Dorsolateral prefrontal cortex (tissue), 120 donors: ENCODE measurements at regions of chr6 and their contacts with region 1.

Region 1: DNA sequence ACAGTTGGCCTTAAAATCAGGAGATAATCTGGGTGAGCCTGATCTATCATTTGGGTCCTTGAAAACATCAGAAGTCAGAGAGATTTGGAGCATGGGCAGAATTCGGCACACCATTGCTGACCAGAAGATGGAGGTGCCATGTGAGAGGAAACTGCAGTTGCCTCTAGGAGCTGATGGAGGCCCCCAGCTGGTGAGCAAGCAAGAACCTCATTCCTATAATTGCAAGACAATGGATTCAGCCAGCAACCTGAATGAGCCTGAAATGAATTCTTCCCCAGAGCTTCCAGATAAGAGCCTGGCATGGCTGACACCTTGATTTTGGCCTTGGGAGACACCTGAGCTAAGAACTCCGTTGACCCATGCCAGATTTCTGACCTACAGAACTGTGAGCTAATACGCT is 76.3 kb upstream of the FYN start:
- DNase-seq: no peak
- H3K4me3 ChIP-seq: no peak overlapping the region
- H3K27ac ChIP-seq: no peak overlapping the region
- H3K27me3 ChIP-seq: peaks cover 0 to 8% (median 0%) of the 10 kb centered on the region in 45 donors
- CTCF ChIP-seq: no peak

Region 2: GRCh38 chr6:111057074-111057752 is 892.3 kb before region 1 on chr6:
- intact Hi-C with region 1: no loop called
- DNase-seq: peak in 2 of 10 donors; percentile 16 to 28
- H3K4me3 ChIP-seq: no peak overlapping the region
- H3K27ac ChIP-seq: no peak overlapping the region
- H3K27me3 ChIP-seq: peaks cover 0 to 10% (median 0%) of the 10 kb centered on the region in 45 donors
- CTCF ChIP-seq: peak; percentile 26 to 70 (median 56)

Region 3: DNA sequence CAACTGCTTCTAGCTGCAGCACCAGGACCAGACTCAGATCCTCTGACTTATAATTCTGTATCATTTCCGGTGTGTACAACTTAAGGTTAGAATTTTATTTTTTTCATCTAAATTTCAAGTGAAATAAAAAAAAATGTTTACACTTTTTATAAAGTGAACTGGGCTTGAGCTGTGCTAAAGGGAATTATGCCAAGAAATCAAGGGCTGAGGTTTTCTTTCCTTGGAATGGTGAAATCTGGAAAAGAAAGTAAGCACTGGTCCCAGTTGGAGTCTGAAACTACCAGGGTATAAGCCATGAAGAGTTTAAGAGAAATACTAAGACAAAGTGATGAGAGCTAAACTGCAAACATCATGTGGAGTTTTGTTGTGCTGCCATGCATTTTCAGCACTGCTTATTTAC is 54.6 kb before region 1 on chr6:
- intact Hi-C with region 1: loop called in 1 of 2 experiments (anchors 5 kb)
- DNase-seq: no peak
- H3K4me3 ChIP-seq: no peak overlapping the region
- H3K27ac ChIP-seq: no peak overlapping the region
- H3K27me3 ChIP-seq: no peaks in the 10 kb centered on the region
- CTCF ChIP-seq: no peak

Region 4: GRCh38 chr6:111936718-111937117 is 12.8 kb before region 1 on chr6:
- intact Hi-C with region 1: no loop called
- DNase-seq: no peak
- H3K4me3 ChIP-seq: no peak overlapping the region
- H3K27ac ChIP-seq: no peak overlapping the region
- H3K27me3 ChIP-seq: peaks cover 0 to 5% (median 0%) of the 10 kb centered on the region in 45 donors
- CTCF ChIP-seq: no peak